Breast epithelium (tissue), 4 donors: ENCODE measurements at regions of chr1 and their contacts with region 1.

Region 1: DNA sequence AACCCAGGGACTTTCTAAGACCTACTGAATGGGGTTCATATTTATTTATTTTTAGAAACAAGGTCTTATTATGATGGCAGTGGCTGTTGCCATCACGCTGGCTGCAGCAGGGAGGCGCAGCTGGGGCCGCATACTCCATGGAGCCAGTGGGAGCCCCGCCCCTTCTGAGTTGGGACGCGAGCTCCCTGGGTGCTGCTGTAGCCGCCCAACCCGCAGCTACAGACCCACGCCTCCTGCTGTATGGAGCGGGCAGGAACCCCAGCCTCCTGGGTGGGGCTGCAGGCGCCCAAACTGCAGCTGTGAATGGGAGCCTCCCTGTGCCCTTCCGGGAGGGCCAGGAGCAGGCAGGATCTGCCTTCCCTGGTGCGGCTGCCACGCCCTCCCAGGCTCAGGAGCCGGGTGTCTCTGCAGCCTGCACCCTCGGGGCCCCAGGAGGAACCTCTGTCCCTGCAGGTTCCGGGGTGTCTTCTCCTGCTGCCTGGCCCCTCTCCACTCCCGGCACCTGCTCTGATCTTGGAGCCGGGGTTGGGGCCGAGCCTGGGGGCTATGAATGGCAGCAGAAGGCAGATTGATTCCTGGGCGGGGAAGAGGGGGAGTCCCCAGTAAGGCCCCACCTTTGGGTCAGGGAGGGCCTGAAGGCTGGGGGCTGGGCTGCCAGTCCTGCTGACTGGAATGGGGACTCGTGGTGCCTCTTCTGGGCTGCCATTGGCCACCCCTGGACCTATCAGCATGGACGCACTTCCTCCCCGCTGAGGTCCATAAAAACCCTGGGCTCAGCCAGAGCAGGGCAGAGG is 66.6 kb upstream of the LRRN2 start:
- DNase-seq: peak in 1 of 2 donors; percentile 57
- H3K4me3 ChIP-seq: peak overlapping the region in 2 of 3 donors; percentile 26 to 53
- H3K27ac ChIP-seq: no peak overlapping the region
- H3K4me1 ChIP-seq: no peaks in the 10 kb centered on the region
- H3K27me3 ChIP-seq: no peaks in the 10 kb centered on the region
- CTCF ChIP-seq: peak in 1 of 3 donors; percentile 7
- POLR2A ChIP-seq: no peak

Region 2: DNA sequence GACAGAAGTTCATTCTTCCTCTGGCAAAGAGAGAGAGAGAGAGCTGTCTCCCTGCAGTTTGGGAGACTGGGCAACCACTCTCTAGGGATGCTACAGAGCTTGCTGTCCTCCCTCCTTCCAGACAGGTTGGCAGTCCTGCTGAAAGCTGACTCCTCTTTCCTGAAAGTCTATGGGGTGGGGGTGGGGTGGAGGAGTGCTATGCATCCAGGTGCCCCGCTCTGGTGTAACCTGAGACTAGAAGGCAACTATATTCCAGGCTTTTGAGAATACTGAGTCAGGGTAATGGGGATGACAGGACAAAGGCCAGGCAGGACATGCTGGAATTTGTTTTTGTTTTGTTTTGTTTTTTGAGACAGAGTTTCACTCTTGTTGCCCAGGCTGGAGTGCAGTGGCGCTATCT is 1202.8 kb before region 1 on chr1:
- intact Hi-C with region 1: loop called (anchors 5 kb)
- DNase-seq: no peak
- H3K4me3 ChIP-seq: no peak overlapping the region
- H3K27ac ChIP-seq: no peak overlapping the region
- H3K4me1 ChIP-seq: no peaks in the 10 kb centered on the region
- H3K27me3 ChIP-seq: no peaks in the 10 kb centered on the region
- CTCF ChIP-seq: no peak
- POLR2A ChIP-seq: no peak

Region 3: GRCh38 chr1:204736836-204737387 is 15.2 kb before region 1 on chr1:
- intact Hi-C with region 1: no loop called
- DNase-seq: no peak
- H3K4me3 ChIP-seq: no peak overlapping the region
- H3K27ac ChIP-seq: no peak overlapping the region
- H3K4me1 ChIP-seq: no peaks in the 10 kb centered on the region
- H3K27me3 ChIP-seq: no peaks in the 10 kb centered on the region
- CTCF ChIP-seq: no peak
- POLR2A ChIP-seq: no peak